Naive thymus-derived CD8-positive, alpha-beta T cell (primary cell): ENCODE measurements at regions of chr1 and their contacts with region 1.

Region 1: DNA sequence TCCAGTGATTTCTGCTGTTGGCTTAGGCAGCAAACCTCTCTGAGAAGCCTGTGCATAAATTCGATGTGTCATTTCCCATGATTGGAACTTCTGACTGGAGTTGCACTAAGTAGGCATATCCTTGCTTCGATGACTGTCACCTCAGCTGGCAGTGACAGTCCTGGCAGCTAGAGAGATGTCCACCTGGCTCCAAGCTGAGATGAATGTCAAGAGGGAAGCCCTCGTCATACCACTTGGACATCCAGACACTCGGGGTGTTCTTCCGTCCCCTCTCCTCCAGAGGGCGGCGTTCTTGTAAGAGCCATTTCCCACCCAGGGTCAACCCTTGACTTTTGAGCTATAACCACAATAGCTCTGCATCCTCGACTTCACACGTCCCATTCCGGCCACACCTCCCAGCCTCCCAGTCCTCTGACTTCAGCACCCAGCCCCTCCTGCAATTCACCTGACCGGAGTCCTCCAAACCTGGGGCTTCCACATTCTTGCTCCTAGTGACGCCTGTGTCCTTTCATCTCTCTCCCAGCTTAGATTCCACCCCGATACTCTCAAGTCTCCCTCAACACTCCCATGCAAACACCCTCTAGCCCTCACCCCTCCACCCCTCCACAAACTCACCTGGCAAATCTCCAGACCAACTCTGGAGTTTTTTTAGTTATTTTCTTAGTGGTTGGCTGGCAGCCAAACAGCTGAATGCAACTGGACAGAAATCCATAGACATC is 17.3 kb downstream of the CA6 start:
- DNase-seq: peak in 6 of 10 donors; percentile 30 to 52 (median 45)
- ATAC-seq: peak; percentile 29 to 49
- H3K4me3 Mint-ChIP-seq: peak overlapping the region; percentile 85 to 100 (median 91)
- H3K27ac Mint-ChIP-seq: peak overlapping the region; percentile 91 to 99 (median 94)
- H3K4me1 Mint-ChIP-seq: peaks cover 42 to 87% (median 77%) of the 10 kb centered on the region in 4 donors
- H3K27me3 Mint-ChIP-seq: no peaks in the 10 kb centered on the region

Region 2: GRCh38 chr1:8903908-8904650 is 58.9 kb before region 1 on chr1:
- POLR2A ChIA-PET with region 1: interaction called, 1,378 read pairs
- DNase-seq: no peak
- ATAC-seq: no peak
- H3K4me3 Mint-ChIP-seq: no peak overlapping the region
- H3K27ac Mint-ChIP-seq: peak overlapping the region; percentile 22 to 88 (median 72)
- H3K4me1 Mint-ChIP-seq: peaks cover 28 to 65% (median 53%) of the 10 kb centered on the region in 4 donors
- H3K27me3 Mint-ChIP-seq: no peaks in the 10 kb centered on the region

Region 3: GRCh38 chr1:8925406-8925805 is 37.6 kb before region 1 on chr1:
- POLR2A ChIA-PET with region 1: interaction called, 1,378 read pairs
- DNase-seq: no peak
- ATAC-seq: no peak
- H3K4me3 Mint-ChIP-seq: no peak overlapping the region
- H3K27ac Mint-ChIP-seq: no peak overlapping the region
- H3K4me1 Mint-ChIP-seq: peaks cover 16 to 44% (median 28%) of the 10 kb centered on the region in 4 donors
- H3K27me3 Mint-ChIP-seq: no peaks in the 10 kb centered on the region

Region 4: DNA sequence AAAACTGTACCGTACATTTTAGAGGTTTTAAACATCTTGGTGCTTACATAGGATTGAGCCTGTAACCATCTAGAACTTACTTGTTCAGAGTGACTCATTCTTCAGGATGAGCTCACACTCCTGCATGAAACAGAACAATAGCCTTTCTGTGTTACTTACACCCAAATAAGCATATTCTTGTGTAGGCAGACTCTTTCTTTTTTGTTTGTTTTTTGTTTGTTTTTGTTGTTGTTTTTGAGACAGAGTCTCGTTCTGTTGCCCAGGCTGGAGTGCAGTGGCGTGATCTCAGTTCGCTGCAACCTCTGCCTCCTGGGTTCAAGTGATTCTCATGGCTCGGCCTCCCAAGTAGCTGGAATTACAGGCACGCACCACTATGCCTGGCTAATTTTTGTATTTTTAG is 21.1 kb before region 1 on chr1:
- POLR2A ChIA-PET with region 1: interaction called, 1,378 read pairs
- DNase-seq: no peak
- ATAC-seq: peak in 1 of 2 donors; percentile 33
- H3K4me3 Mint-ChIP-seq: peak overlapping the region in 5 of 10 donors; percentile 18 to 84 (median 73)
- H3K27ac Mint-ChIP-seq: peak overlapping the region in 9 of 10 donors; percentile 55 to 95 (median 87)
- H3K4me1 Mint-ChIP-seq: peaks cover 58 to 96% (median 92%) of the 10 kb centered on the region in 4 donors
- H3K27me3 Mint-ChIP-seq: no peaks in the 10 kb centered on the region

Region 5: GRCh38 chr1:8987881-8988617 is 25.1 kb after region 1 on chr1:
- POLR2A ChIA-PET with region 1: interaction called, 292 read pairs
- DNase-seq: peak; percentile 50 to 83 (median 73)
- ATAC-seq: peak; percentile 58 to 63
- H3K4me3 Mint-ChIP-seq: peak overlapping the region; percentile 46 to 85 (median 70)
- H3K27ac Mint-ChIP-seq: peak overlapping the region; percentile 92 to 97 (median 95)
- H3K4me1 Mint-ChIP-seq: peaks cover 18 to 44% (median 40%) of the 10 kb centered on the region in 4 donors
- H3K27me3 Mint-ChIP-seq: no peaks in the 10 kb centered on the region

Region 6: GRCh38 chr1:9018333-9018732 is 55.4 kb after region 1 on chr1:
- POLR2A ChIA-PET with region 1: no interaction called
- DNase-seq: no peak
- ATAC-seq: no peak
- H3K4me3 Mint-ChIP-seq: no peak overlapping the region
- H3K27ac Mint-ChIP-seq: no peak overlapping the region
- H3K4me1 Mint-ChIP-seq: peaks cover 2 to 10% (median 6%) of the 10 kb centered on the region in 4 donors
- H3K27me3 Mint-ChIP-seq: peaks cover 0 to 8% (median 4%) of the 10 kb centered on the region in 5 donors

Region 7: GRCh38 chr1:9028921-9029705 is 66.1 kb after region 1 on chr1:
- POLR2A ChIA-PET with region 1: no interaction called
- DNase-seq: no peak
- ATAC-seq: no peak
- H3K4me3 Mint-ChIP-seq: no peak overlapping the region
- H3K27ac Mint-ChIP-seq: no peak overlapping the region
- H3K4me1 Mint-ChIP-seq: no peaks in the 10 kb centered on the region
- H3K27me3 Mint-ChIP-seq: peaks cover 0 to 8% (median 0%) of the 10 kb centered on the region in 5 donors